Aorta (tissue), 5 donors: ENCODE measurements at regions of chr17 and their contacts with region 1.

Region 1: GRCh38 chr17:49687878-49688491 is 10.1 kb upstream of the SPOP start:
- DNase-seq: no peak
- ATAC-seq: no peak
- H3K4me3 ChIP-seq: no peak overlapping the region
- H3K27ac ChIP-seq: peak overlapping the region; percentile 80 to 90
- H3K4me1 ChIP-seq: peaks cover 0 to 3% of the 10 kb centered on the region in 2 donors
- H3K27me3 ChIP-seq: no peaks in the 10 kb centered on the region

Region 2: DNA sequence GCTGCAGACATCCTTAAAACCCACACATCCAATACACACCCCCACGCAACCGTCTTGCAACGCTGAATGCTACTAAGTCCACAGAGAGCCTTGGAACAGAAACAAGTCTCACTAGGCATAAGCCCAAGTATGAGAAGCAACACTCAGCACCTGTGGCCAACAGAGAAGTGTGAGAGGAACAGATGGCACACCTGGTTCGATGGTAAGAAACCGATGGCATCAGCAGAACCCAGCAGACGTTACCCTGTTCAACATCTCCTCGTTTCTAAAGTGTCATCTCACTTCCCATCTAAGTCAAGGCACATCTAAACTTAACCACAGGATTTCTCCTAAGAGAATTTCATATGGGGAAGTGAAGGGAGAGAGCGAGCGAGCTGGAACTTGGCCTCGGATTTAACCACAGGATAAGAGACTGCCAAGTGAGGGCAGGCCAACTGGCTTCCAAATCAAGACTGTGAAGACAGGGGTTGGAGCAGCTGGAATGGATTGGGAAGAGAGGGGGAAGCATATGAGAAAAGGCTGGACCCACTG is 71.3 kb before region 1 on chr17:
- intact Hi-C with region 1: loop called in 1 of 2 experiments (anchors 2 kb)
- DNase-seq: peak; percentile 82 to 86
- ATAC-seq: peak; percentile 84
- H3K4me3 ChIP-seq: no peak overlapping the region
- H3K27ac ChIP-seq: peak overlapping the region; percentile 39 to 95
- H3K4me1 ChIP-seq: peaks cover 5 to 6% of the 10 kb centered on the region in 2 donors
- H3K27me3 ChIP-seq: no peaks in the 10 kb centered on the region

Region 3: DNA sequence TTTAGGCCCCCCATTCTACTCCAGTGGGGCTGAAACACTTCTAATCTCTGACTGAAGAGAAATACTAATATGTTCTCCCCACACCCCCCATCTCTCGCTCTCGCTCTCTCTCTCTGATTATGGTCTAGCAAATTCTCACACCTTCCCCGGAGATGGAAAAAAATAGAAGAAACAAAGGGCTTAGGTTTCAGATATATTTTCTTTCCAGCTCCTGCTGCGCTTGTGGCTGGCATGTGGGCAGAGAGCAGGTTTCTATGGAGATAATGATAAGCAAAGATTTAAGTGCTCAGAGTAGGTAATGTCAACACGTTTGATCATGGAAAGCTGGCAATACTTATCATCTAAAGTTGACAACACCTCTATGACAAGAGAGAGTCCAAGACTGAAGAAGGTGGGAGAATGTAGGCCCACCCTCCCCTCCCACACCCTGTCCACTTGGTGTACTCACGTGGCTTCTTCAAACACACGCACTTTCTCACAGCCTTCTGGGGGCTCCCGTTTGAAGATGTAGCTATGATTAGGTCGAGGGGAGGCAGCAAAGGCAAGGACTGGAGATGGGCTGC is 27.8 kb after region 1 on chr17:
- intact Hi-C with region 1: no loop called
- DNase-seq: no peak
- ATAC-seq: no peak
- H3K4me3 ChIP-seq: no peak overlapping the region
- H3K27ac ChIP-seq: no peak overlapping the region
- H3K4me1 ChIP-seq: no peaks in the 10 kb centered on the region
- H3K27me3 ChIP-seq: no peaks in the 10 kb centered on the region